ENCODE measurements at regions of chr20 and their contacts with region 1.

Region 1: DNA sequence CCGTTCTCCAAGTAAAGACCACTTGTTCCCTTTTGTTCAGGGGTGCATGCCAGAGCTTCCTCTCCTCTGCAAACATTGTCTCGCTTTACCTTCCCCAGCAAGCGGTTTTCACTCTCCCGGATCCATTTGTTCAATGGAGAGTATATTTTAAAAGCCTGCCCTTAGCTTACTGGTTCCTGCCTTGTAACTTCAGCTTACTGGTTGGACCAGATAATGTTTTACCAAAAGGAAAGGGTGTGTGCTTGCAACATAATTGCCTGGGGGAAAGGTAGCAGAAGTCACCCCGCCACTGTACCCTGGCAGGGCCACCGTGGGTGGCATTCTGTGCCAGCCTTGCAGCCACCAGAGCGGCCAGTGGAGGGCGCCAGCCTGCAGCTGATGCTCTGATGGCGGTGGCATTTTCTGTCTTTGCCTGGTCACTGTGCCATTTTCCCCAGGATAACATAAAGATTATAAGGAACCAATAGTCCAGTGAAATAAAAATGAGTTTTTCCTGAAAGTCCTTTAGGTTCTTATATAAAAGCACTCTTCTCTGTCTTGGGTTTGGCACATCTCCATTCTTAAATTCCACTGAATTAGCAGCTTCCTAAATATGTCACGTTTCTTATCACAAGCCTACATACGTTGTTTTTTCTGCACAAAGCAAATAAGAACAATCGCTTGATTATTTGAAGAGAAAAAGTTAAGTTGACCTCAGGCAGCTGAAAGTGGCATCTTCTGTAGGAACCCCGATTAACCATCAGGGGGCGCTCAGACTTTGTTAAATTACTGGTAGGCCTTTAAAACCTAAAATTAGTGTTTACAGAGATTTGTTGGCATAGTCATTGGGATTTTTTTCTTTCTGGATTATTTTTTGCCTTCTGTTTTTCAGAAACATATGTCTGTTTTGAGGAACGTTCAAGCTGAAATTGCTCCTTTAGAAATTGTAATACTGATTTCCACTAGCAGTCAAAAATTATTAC is 67.4 kb upstream of the XRN2 start:
- DNase-seq: no peak
- H3K4me3 ChIP-seq: no peak overlapping the region
- CTCF ChIP-seq: peak; percentile 97

Region 2: DNA sequence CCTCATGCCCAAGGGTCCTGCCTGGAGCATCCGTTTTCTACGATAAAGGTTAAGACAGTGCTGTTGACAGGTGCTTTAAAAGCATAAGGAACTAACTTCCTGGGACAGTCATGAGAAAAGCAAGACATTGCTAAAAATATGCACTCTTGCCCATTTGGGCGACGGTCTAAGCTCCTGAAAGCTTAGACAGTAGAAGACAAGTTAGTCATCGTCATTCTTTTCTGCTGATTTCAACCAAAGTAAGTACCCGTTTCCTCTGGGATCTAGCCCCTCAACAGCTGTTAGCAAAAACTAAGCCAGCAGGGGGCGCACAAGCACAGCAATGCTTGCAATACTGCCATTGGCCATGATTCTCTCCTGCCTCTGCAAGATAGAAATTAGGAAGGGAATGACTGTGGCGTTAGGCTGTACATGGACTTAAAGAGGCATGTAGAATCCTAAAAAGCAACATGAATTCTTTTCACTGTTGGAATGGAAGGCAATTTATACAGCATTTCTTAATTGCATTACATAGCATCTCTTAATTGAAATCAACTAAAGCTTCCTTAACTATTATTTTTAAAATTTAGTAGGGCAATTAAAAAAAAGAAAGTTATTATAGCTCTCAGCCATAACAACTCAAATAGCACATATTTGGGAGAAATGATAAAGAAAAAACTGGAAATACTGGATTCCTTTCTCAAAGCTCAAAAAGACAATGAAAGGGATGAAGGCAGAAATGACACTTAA is 375.5 kb before region 1 on chr20:
- CTCF ChIA-PET with region 1: interaction called, 16 read pairs
- POLR2A ChIA-PET with region 1: no interaction called
- DNase-seq: peak; percentile 40
- H3K4me3 ChIP-seq: no peak overlapping the region
- CTCF ChIP-seq: peak; percentile 77

Region 3: GRCh38 chr20:20993372-20993771 is 242.4 kb before region 1 on chr20:
- CTCF ChIA-PET with region 1: no interaction called
- POLR2A ChIA-PET with region 1: no interaction called
- DNase-seq: no peak
- H3K4me3 ChIP-seq: no peak overlapping the region
- CTCF ChIP-seq: no peak

Region 4: DNA sequence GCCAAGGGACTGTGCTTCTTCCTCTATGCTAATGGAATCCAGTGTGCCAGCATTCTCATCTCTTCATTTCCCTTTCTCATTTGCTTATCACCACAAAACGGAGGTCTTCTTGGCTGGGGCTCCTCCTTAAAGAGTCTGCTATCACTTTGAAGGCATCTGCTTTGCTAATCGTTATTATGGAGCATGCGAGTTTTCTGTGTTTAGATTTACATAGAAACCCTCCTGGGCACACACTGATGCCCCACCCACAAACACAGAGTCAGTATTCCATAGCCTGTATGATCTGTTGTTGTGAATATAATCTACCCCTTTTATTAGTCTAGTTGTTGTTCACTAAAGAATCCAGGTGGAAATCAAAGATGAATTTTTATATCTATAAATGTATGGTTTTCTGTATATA is 16.1 kb before region 1 on chr20:
- CTCF ChIA-PET with region 1: interaction called, 33 read pairs
- POLR2A ChIA-PET with region 1: no interaction called
- DNase-seq: no peak
- H3K4me3 ChIP-seq: no peak overlapping the region
- CTCF ChIP-seq: no peak

Region 5: DNA sequence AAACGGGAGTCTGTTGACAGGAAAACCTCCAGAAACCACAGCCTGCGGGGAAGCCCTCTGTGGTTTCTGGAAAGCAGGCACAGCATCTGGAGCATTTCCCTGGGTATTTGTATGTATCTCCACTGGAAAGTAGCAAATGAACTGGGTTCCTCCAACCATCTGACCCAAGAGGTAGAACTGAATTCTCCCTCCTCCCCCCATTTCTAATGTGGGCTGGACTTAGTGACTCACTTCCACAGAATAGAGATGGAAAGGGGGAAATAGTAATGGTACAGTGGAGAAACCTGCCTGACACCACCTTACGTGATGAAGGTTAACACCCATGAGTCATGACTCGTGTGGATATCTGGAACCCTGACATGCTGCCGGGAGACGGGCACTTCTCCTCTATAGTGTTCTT is 15.5 kb after region 1 on chr20:
- CTCF ChIA-PET with region 1: interaction called, 44 read pairs
- POLR2A ChIA-PET with region 1: no interaction called
- DNase-seq: no peak
- H3K4me3 ChIP-seq: no peak overlapping the region
- CTCF ChIP-seq: no peak

Region 6: DNA sequence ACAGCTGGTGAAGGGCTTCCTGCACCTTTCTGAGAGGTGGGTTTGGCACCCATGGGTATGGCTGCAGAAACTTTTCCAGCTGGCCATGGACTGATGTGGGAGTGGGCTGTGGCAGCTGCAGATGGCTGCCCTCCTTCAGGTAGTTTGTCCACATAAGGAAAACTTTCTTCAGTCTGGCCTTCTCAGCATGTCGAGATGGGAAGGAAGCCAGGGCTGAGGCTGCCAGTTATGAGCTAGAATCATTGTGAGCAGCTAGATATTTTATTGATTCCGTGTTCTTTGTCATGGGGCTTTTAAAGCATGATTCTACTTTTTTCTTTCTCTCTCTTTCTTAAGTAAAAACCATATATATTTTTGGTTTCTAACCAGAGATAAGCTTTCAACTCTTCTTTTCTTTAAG is 144.9 kb after region 1 on chr20:
- CTCF ChIA-PET with region 1: interaction called, 18 read pairs
- POLR2A ChIA-PET with region 1: no interaction called
- DNase-seq: no peak
- H3K4me3 ChIP-seq: no peak overlapping the region
- CTCF ChIP-seq: no peak

Region 7: GRCh38 chr20:21505161-21505809 is 269.5 kb after region 1 on chr20:
- CTCF ChIA-PET with region 1: interaction called, 374 read pairs
- POLR2A ChIA-PET with region 1: no interaction called
- DNase-seq: no peak
- H3K4me3 ChIP-seq: peak overlapping the region; percentile 51
- CTCF ChIP-seq: peak; percentile 94

Measured in AG04449 (cell line).